Thyroid gland (tissue), 4 donors: ENCODE measurements at regions of chr5 and their contacts with region 1.

Region 1: GRCh38 chr5:10689391-10690081 is 71.5 kb downstream of the DAP start:
- DNase-seq: no peak
- H3K4me3 ChIP-seq: no peak overlapping the region
- H3K27ac ChIP-seq: no peak overlapping the region
- H3K4me1 ChIP-seq: no peaks in the 10 kb centered on the region
- H3K27me3 ChIP-seq: no peaks in the 10 kb centered on the region
- CTCF ChIP-seq: no peak
- POLR2A ChIP-seq: no peak

Region 2: DNA sequence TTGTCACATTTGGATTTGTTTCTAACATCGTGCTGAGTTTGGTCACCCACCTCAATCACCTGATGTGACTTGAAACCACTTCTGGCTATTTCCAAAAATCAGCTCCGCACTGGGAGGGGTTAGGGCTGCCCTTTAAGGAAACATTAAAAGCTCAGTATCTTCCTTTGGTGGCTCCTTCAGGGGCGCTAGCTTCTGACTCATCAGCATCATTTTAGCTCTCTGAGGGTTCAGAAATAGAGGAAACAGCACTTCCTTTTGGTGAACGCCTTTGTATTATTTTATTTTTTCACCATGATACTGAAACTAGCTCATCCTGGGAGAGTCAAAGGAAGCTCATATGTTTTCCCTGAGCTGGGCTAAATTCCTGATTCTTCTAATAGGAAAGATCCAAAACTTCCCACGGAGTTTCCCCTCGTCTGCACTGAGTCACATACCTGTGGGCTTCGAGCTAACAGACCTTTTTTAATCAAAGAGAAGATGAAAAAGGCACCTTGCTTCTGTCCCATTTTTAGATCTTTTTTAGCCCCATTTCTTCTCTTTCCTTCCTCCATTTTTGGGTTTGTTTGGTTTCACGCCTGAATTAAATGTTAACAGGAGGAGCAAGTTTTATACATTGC is 199.6 kb before region 1 on chr5:
- intact Hi-C with region 1: no loop called
- DNase-seq: no peak
- H3K4me3 ChIP-seq: no peak overlapping the region
- H3K27ac ChIP-seq: no peak overlapping the region
- H3K4me1 ChIP-seq: peaks cover 0 to 16% of the 10 kb centered on the region in 2 donors
- H3K27me3 ChIP-seq: no peaks in the 10 kb centered on the region
- CTCF ChIP-seq: no peak
- POLR2A ChIP-seq: no peak

Region 3: DNA sequence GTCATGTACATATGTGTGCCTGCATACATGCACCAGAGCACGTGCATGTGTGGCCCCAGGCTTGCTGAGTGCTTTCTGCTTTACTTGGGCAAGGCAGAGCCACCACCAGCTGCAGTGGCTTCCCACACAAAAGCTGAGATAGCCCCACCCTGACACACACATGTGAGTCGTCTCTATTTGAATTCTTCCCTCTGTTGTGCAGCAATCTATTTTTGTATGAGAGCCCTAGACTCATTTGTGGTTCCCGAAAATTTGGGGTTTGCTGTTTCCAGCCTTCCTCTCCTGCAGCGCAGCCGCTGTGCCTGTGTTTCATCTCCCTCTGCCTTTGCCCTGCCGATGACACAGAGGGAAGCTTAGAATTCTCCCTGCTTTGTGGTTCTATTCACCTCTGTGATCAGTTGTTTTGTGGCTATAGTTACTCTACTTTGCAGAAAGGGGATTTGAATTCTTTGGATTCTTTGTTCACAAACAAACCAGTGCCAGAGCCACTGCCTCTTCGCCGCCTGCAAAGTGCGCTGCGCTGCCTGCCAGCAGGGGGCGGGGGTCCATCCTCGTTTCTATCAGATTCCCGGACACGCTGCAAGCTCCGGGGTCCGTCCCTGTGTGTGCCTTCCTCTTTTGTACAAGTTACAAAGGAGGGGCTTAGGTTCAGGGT is 167.3 kb after region 1 on chr5:
- intact Hi-C with region 1: loop called (anchors 10 kb)
- DNase-seq: peak; percentile 55 to 57
- H3K4me3 ChIP-seq: no peak overlapping the region
- H3K27ac ChIP-seq: no peak overlapping the region
- H3K4me1 ChIP-seq: peaks cover 0 to 4% of the 10 kb centered on the region in 2 donors
- H3K27me3 ChIP-seq: no peaks in the 10 kb centered on the region
- CTCF ChIP-seq: peak; percentile 47 to 81 (median 61)
- POLR2A ChIP-seq: no peak

Region 4: GRCh38 chr5:11000515-11001353 is 311.2 kb after region 1 on chr5:
- intact Hi-C with region 1: no loop called
- DNase-seq: no peak
- H3K4me3 ChIP-seq: no peak overlapping the region
- H3K27ac ChIP-seq: no peak overlapping the region
- H3K4me1 ChIP-seq: no peaks in the 10 kb centered on the region
- H3K27me3 ChIP-seq: no peaks in the 10 kb centered on the region
- CTCF ChIP-seq: no peak
- POLR2A ChIP-seq: no peak

Region 5: GRCh38 chr5:11182441-11183268 is 493.1 kb after region 1 on chr5:
- intact Hi-C with region 1: loop called (anchors 5 kb)
- DNase-seq: no peak
- H3K4me3 ChIP-seq: no peak overlapping the region
- H3K27ac ChIP-seq: no peak overlapping the region
- H3K4me1 ChIP-seq: no peaks in the 10 kb centered on the region
- H3K27me3 ChIP-seq: no peaks in the 10 kb centered on the region
- CTCF ChIP-seq: peak in 4 of 6 experiments; percentile 52 to 60 (median 52)
- POLR2A ChIP-seq: no peak

Region 6: GRCh38 chr5:11322133-11322532 is 632.6 kb after region 1 on chr5:
- intact Hi-C with region 1: no loop called
- DNase-seq: no peak
- H3K4me3 ChIP-seq: no peak overlapping the region
- H3K27ac ChIP-seq: no peak overlapping the region
- H3K4me1 ChIP-seq: peaks cover 6 to 7% of the 10 kb centered on the region in 2 donors
- H3K27me3 ChIP-seq: no peaks in the 10 kb centered on the region
- CTCF ChIP-seq: no peak
- POLR2A ChIP-seq: no peak